Naive thymus-derived CD8-positive, alpha-beta T cell (primary cell): ENCODE measurements at regions of chr1 and their contacts with region 1.

Region 1: DNA sequence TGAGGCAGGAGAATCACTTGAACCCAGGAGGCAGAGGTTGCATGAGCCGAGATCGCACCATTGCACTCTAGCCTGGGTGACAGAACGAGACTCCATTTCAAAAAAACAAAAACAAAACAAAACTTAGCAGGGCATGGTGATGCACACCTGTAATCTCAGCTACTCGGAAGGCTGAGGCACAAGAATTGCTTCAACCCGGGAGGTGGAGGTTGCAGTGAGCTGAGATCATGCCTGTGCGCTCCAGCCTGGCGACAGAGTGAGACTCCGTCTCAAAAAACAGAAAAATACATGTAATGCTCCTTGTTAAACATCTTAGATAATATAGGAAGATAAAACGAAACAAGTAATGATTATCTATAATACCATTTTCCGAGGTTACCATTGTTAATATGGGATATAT is 22.5 kb downstream of the RCC1 start:
- DNase-seq: no peak
- ATAC-seq: no peak
- H3K4me3 Mint-ChIP-seq: no peak overlapping the region
- H3K27ac Mint-ChIP-seq: no peak overlapping the region
- H3K4me1 Mint-ChIP-seq: peaks cover 0 to 4% (median 0%) of the 10 kb centered on the region in 4 donors
- H3K27me3 Mint-ChIP-seq: no peaks in the 10 kb centered on the region

Region 2: DNA sequence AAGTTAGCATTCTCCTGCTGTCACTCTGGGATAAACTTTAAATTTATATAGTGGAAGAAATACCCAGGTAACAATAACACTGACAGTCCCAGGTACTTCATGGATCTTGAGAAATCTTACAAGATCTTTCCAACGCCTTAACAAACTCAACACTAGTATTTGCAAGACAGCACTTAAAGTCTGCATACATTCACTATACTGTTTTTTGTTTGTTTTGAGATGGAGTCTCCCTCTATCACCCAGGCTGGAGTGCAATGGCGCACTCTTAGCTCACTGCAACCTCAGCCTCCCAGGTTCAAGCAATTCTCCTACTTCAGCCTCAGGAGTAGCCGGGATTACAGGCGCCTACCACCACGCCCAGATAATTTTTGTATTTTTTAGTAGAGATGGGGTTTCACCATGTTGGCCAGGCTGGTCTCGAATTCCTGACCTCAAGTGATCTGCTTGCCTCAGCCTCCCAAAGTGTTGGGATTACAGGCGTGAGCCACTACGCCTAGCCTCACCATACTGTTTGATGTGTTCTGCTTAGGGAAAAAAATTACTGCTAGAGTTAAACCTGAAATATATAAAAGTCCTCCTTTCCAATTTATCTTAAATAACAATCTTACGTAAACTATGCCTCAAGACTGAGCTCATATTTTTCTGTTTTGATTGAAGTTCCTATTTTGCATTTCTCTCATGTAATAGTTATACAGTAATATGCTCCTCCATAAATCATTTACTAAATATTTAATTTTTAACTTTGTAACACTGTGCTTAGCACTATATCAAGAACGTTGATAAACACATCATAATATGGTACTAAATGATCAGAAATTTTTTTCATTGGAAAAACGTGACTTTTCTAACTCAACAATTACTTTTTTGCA is 457.4 kb before region 1 on chr1:
- POLR2A ChIA-PET with region 1: interaction called, 10 read pairs
- DNase-seq: no peak
- ATAC-seq: no peak
- H3K4me3 Mint-ChIP-seq: no peak overlapping the region
- H3K27ac Mint-ChIP-seq: peak overlapping the region in 1 of 10 donors; percentile 11
- H3K4me1 Mint-ChIP-seq: peaks cover 6 to 56% (median 41%) of the 10 kb centered on the region in 4 donors
- H3K27me3 Mint-ChIP-seq: no peaks in the 10 kb centered on the region